GM12878 (cell line): ENCODE measurements at regions of chr1 and their contacts with region 1.

Region 1: GRCh38 chr1:20981915-20982314 is 194.8 kb downstream of the EIF4G3 start:
- DNase-seq: no peak
- ATAC-seq: peak; percentile 61; the same call in 2 of the 3 replicates
- H3K4me3 ChIP-seq: no peak overlapping the region
- H3K27ac ChIP-seq: no peak overlapping the region
- H3K4me1 ChIP-seq: no peaks in the 10 kb centered on the region
- H3K27me3 ChIP-seq: no peaks in the 10 kb centered on the region
- CTCF ChIP-seq: peak; percentile 33 to 51 (median 33); a peak in 4 of 6 replicates
- EP300 ChIP-seq: no peak
- POLR2A ChIP-seq: no peak
- RAD21 ChIP-seq: peak; percentile 54

Region 2: DNA sequence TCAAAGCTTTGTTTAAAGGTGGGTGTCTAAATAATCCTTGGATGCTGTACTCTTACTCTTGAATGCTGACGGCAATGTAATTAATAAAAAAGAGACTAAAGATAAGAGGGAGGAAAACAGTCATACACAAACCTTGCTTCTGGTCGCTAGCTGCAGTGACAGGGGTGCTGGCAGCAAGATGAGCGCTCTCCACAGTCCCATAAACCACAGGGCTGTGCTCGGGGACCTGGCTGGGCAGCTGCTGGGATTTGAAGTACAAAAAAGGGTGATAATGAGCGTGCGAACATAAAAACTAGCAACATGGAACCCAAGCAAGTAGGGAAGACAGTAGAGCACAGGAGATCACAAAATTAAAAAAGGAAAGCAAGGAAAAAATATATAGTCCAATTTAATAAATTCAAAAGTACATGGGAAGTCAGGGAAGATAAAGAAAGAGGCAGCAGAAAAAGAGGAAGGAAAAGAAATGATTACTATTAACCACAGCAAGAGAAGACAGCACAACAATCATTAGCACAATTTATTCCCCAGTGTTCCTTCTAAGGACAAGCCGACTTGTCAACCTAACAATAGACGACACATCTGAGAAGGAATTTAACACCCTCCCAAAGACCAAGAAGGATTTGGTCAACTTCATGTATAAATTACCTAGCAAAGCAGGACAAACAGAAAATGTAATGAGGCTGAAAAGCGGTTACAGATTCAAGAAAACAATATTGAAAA is 31.9 kb before region 1 on chr1:
- CTCF ChIA-PET with region 1: no interaction called
- POLR2A ChIA-PET with region 1: no interaction called
- RAD21 ChIA-PET with region 1: no interaction called
- SMC1A ChIA-PET with region 1: no interaction called
- in situ Hi-C with region 1: no loop called
- intact Hi-C with region 1: no loop called
- DNase-seq: no peak
- ATAC-seq: no peak
- H3K4me3 ChIP-seq: no peak overlapping the region
- H3K27ac ChIP-seq: no peak overlapping the region
- H3K4me1 ChIP-seq: no peaks in the 10 kb centered on the region
- H3K27me3 ChIP-seq: no peaks in the 10 kb centered on the region
- CTCF ChIP-seq: no peak
- EP300 ChIP-seq: no peak
- POLR2A ChIP-seq: no peak
- RAD21 ChIP-seq: no peak

Region 3: GRCh38 chr1:20992322-20993056 is 10.6 kb after region 1 on chr1:
- CTCF ChIA-PET with region 1: interaction called, 5 read pairs
- POLR2A ChIA-PET with region 1: no interaction called
- RAD21 ChIA-PET with region 1: interaction called, 5 read pairs
- SMC1A ChIA-PET with region 1: interaction called, 17 read pairs
- in situ Hi-C with region 1: no loop called
- intact Hi-C with region 1: no loop called
- DNase-seq: no peak
- ATAC-seq: peak; percentile 72
- H3K4me3 ChIP-seq: 0 out of 2 replicates have a peak overlapping the region, but pooled peaks have one; percentile 2
- H3K27ac ChIP-seq: peak overlapping the region; percentile 37; the same call in 1 of the 2 replicates
- H3K4me1 ChIP-seq: peaks cover 15% of the 10 kb centered on the region
- H3K27me3 ChIP-seq: no peaks in the 10 kb centered on the region
- CTCF ChIP-seq: no peak
- EP300 ChIP-seq: no peak
- POLR2A ChIP-seq: no peak
- RAD21 ChIP-seq: no peak

Region 4: DNA sequence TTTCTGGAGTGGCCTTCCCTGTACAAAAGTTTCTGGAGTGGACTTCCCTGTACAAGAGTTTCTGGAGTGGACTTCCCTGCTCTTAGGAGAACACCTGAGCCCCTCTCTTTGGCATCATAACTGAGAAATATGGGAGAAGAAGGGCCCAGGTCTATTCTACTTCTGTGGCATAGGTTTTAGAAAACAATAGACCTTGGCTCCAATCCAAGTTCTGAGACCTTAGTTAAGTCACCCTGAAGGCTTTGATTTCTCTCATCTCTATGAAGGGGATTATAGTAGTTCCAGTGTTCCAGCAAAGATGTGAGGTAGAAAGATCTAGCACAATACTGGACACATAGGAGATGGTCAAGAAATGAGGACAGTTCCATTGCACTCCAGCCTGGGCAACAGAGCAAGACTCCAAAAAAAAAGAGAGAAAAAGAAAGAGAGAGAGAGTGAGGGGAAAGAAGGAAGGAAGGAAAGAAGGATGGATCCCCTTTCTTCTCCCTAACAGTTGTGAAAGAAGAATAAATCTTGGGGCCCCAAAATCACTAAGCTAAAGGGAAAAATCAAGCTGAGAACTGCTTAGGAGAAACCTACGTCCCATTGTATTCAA is 208.1 kb after region 1 on chr1:
- CTCF ChIA-PET with region 1: interaction called, 98 read pairs
- POLR2A ChIA-PET with region 1: no interaction called
- RAD21 ChIA-PET with region 1: interaction called, 45 read pairs
- SMC1A ChIA-PET with region 1: interaction called, 43 read pairs
- in situ Hi-C with region 1: loop called (anchors 10 kb)
- intact Hi-C with region 1: loop called (anchors 1 kb)
- DNase-seq: no peak
- ATAC-seq: no peak
- H3K4me3 ChIP-seq: no peak overlapping the region
- H3K27ac ChIP-seq: no peak overlapping the region
- H3K4me1 ChIP-seq: no peaks in the 10 kb centered on the region
- H3K27me3 ChIP-seq: no peaks in the 10 kb centered on the region
- CTCF ChIP-seq: no peak
- EP300 ChIP-seq: no peak
- POLR2A ChIP-seq: no peak
- RAD21 ChIP-seq: no peak